OCI-LY7 (cell line): ENCODE measurements at regions of chr14 and their contacts with region 1.

Region 1: GRCh38 chr14:50311975-50312733 is at the starts of genes DMAC2L and L2HGDH:
- DNase-seq: peak; percentile 97
- H3K4me3 ChIP-seq: peak within 1 kb of the TSS; percentile 73
- H3K27ac ChIP-seq: peak within 1 kb of the TSS; percentile 77
- H3K4me1 ChIP-seq: peaks cover 16% of the 10 kb centered on the region
- CTCF ChIP-seq: 0 out of 2 replicates have a peak, but pooled peaks have one; percentile 3
- total RNA-seq, gene DMAC2L: 5.8 and 13.8 TPM in 2 replicates
- total RNA-seq, gene L2HGDH: 8.7 and 10.0 TPM in 2 replicates

Region 2: DNA sequence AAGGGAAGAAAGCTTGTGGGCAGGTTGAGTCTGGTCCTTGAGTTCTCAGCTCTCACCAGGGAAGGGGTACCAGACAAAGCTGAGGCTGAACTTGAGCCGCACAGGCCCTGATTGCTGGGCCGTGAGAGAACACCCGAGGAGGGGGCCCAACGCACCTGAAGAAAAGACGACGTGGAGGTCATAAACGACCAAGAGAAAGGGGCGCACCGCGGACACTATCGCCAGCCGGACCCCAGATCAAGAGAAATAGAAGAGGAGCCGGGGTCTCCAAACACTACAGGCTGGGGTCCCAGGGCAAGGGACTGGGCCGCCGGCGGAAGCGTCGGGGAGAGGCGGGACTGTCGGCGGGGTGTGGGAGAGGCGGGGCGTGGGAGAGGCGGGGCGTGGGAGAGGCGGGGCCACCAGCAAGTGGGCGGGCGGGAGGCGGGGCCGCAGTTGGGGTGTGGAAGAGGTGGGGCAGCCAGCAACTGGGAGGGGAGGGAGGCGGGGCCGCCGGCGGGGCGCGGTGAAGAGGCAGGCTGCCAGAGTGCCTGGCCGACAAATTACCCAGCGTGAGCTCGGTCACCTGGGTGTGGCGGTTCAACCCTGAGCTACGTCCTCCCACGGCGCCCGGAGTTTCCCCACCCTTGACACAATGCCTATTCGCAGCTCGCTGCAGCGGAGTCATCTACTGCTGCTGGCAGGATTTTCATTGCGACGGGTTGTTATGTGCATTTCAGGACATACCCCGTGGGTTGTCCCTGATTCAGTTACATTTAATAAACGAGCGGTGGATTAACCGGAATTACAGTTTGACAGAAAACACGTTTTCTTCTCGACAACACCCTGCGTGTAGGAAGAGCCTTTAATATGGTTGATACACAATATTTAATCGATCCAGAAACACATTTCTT is 444.1 kb before region 1 on chr14:
- CTCF ChIA-PET with region 1: no interaction called
- POLR2A ChIA-PET with region 1: interaction called, 3 read pairs
- intact Hi-C with region 1: loop called (anchors 10 kb)
- DNase-seq: peak; percentile 97
- H3K4me3 ChIP-seq: peak overlapping the region; percentile 71
- H3K27ac ChIP-seq: peak overlapping the region; percentile 75
- H3K4me1 ChIP-seq: peaks cover 50% of the 10 kb centered on the region
- CTCF ChIP-seq: no peak; the same call in 1 of the 2 replicates

Region 3: GRCh38 chr14:50231475-50232275 is 80.5 kb before region 1 on chr14 and contains the start of gene SOS2:
- CTCF ChIA-PET with region 1: no interaction called
- POLR2A ChIA-PET with region 1: interaction called, 3 read pairs
- intact Hi-C with region 1: loop called (anchors 1 kb)
- DNase-seq: peak; percentile 91
- H3K4me3 ChIP-seq: peak within 1 kb of the TSS; percentile 94
- H3K27ac ChIP-seq: peak within 1 kb of the TSS; percentile 81
- H3K4me1 ChIP-seq: peaks cover 18% of the 10 kb centered on the region
- CTCF ChIP-seq: 0 out of 2 replicates have a peak, but pooled peaks have one; percentile 12
- total RNA-seq, gene SOS2: 13.5 and 16.5 TPM in 2 replicates

Region 4: GRCh38 chr14:50363714-50364111 is 51.6 kb after region 1 on chr14:
- CTCF ChIA-PET with region 1: no interaction called
- POLR2A ChIA-PET with region 1: no interaction called
- intact Hi-C with region 1: loop called (anchors 5 kb)
- DNase-seq: peak; percentile 83
- H3K4me3 ChIP-seq: peak overlapping the region; percentile 35
- H3K27ac ChIP-seq: no peak overlapping the region
- H3K4me1 ChIP-seq: peaks cover 12% of the 10 kb centered on the region
- CTCF ChIP-seq: no peak

Region 5: GRCh38 chr14:50510157-50510556 is 198.0 kb after region 1 on chr14:
- CTCF ChIA-PET with region 1: no interaction called
- POLR2A ChIA-PET with region 1: no interaction called
- intact Hi-C with region 1: no loop called
- DNase-seq: no peak
- H3K4me3 ChIP-seq: no peak overlapping the region
- H3K27ac ChIP-seq: no peak overlapping the region
- H3K4me1 ChIP-seq: no peaks in the 10 kb centered on the region
- CTCF ChIP-seq: no peak